ENCODE measurements at regions of chr5 and their contacts with region 1.

Region 1: DNA sequence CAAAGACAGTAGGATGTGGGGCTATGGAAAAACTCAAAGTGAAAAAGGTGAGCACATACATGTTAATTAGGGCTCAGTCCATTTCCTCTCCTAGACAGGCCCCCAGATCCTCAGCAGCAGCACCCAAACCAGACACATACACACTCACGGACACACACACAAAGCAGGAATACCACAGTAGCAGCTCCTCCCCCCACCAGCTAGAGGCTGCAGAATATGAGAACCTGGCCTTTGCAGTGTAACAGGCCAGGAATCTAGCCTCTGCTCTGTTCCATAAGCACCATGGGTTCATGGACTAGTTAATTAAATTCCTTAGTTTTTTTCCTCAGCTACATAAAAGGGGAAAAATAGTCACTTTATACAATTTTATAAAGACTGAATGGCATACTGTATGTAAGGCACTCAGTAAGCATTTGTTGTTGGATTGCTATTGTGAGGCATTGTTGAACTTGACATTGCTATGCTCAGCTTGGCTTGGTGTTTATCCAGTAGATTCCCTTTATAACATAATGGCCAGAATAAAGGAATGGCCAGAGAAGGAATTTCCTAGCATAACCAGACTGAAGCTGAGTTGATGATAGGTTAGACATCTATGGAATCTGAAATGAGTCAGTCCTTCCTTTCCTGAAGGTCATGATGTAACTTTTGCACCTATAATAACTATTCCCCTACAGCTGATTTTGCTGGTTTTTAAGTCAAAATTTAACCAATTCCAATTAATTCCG is 186.8 kb downstream of the SEMA5A start:
- DNase-seq: no peak
- H3K4me3 ChIP-seq: no peak overlapping the region
- H3K27ac ChIP-seq: no peak overlapping the region
- H3K4me1 ChIP-seq: peaks cover 0 to 12% (median 4%) of the 10 kb centered on the region in 3 donors
- H3K27me3 ChIP-seq: no peaks in the 10 kb centered on the region
- CTCF ChIP-seq: no peak
- POLR2A ChIP-seq: no peak

Region 2: DNA sequence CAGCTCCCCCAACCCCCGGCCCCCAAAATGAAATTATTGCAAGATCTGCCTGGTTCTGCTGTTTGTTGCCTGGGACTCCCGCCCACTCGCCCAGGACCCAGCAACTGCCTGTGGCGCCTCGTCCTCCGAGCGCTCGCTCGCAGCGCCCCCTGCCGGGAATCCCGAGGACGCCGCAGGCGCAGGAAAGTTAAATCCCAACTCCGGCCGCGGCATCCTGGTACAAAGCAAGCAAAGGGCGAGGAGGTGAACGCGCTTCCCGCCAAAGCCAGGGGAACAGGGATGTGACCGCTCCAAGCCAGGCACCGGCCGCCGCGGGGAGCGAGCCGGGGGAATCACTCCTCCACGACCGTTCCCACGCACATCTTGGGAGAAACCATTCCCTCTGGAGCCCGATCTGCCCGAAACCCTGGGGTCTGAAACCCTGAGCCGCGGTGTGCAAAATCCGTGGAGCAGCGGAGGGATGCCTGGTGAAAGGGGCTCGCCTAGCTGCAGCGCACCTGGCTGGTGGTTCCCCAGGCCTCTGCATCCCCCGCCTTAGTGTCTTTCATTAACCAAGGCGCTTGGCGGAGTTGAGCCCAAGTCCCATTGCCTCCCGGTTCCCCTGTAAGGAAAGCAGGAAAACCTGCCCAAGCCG is 185.5 kb after region 1 on chr5:
- intact Hi-C with region 1: loop called (anchors 5 kb)
- DNase-seq: no peak
- H3K4me3 ChIP-seq: peak overlapping the region; percentile 81 to 89 (median 84)
- H3K27ac ChIP-seq: peak overlapping the region; percentile 83 to 94 (median 92)
- H3K4me1 ChIP-seq: peaks cover 4 to 41% (median 14%) of the 10 kb centered on the region in 3 donors
- H3K27me3 ChIP-seq: peaks cover 0 to 25% (median 0%) of the 10 kb centered on the region in 4 donors
- CTCF ChIP-seq: peak; percentile 72 to 93 (median 83)
- POLR2A ChIP-seq: no peak

Measured in esophagus squamous epithelium (tissue), 5 donors.